PC-9 (cell line): ENCODE measurements at regions of chr9 and their contacts with region 1.

Region 1: DNA sequence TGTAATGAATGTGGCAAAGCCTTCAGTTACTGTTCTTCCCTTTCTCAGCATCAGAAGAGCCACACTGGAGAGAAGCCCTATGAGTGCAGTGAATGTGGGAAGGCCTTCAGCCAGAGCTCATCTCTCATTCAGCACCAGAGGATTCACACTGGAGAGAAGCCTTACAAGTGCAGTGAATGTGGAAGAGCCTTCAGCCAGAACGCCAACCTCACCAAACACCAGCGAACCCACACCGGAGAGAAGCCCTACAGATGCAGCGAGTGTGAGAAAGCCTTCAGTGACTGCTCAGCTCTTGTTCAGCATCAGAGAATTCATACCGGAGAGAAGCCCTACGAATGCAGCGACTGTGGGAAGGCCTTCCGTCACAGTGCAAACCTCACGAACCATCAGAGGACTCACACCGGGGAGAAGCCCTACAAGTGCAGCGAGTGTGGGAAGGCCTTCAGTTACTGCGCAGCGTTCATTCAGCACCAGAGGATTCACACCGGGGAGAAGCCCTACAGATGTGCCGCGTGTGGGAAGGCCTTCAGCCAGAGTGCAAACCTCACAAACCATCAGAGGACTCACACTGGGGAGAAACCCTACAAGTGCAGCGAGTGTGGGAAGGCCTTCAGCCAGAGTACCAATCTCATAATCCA is 6.8 kb downstream of the RPL12 start:
- DNase-seq: no peak
- H3K4me3 ChIP-seq: no peak overlapping the region
- H3K27ac ChIP-seq: no peak overlapping the region
- H3K4me1 ChIP-seq: 0 out of 2 replicates have a peak, but pooled peaks cover 12% of the 10 kb centered on the region
- H3K27me3 ChIP-seq: no peaks in the 10 kb centered on the region
- CTCF ChIP-seq: no peak

Region 2: DNA sequence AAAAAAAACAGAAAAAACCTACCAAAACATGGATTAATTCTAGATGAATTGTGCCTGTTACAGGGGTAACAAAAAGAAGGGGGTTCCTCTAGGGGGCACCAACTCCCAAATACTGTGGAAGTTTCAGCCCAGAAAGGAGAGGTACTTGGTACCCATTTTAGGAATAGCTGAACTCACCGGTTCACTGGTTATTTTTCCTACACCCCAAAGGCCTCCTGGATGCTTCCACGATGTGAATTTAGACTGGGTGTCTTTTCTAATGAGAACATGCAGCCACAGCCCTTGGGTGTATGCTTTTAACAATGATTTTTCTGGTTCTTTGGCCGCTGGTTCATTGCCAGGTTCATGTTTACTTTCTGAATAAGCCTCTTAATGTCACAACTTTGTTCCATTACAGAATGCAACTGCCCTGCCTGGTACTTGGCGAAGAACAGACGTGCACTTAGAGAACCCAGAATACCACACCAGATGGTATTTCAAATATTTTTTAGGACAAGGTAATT is 133.1 kb before region 1 on chr9:
- CTCF ChIA-PET with region 1: no interaction called
- POLR2A ChIA-PET with region 1: interaction called, 17 read pairs
- intact Hi-C with region 1: no loop called
- DNase-seq: peak; percentile 63 to 84
- H3K4me3 ChIP-seq: no peak overlapping the region
- H3K27ac ChIP-seq: no peak overlapping the region; the same call in 1 of the 2 replicates
- H3K4me1 ChIP-seq: peaks cover 34% of the 10 kb centered on the region
- H3K27me3 ChIP-seq: no peaks in the 10 kb centered on the region
- CTCF ChIP-seq: peak; percentile 62; the same call in 1 of the 2 replicates

Region 3: DNA sequence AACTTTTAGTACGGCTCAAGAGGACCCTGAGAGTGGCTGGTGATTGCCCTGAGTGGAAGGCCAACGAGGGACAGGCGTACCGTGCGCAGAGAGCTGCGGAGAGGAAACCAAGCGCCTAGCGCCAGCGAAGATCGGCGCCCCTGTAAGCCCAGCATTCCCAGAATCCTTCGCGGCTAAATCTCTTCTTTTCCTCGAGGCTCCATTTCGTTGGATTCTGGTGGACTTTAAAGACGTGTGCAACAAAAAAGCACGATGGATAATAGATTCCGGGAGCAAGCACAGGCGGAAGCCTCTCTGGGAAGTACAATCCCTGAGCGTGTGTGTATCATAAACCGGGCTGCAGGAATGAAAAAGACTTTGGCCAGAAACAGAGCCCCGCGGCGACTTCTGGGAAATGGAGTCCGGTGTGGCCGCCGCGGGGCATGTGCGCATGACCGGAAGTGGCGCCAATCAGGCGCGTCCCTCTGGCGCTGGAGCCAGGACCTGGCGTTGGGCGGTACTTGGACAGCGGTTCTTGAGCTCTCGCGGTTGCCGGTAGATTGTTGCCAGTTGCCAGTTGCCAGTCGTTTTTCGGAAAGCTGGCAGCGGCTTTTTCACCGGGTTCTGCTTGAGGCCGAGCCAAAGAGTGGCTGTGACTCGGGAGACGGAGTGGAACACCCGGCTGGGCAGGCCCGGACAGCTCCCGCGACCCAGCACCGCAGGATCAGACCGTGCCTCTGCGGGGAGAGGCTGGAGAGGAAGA is 20.3 kb before region 1 on chr9 and contains the start of gene ZNF79:
- CTCF ChIA-PET with region 1: no interaction called
- POLR2A ChIA-PET with region 1: interaction called, 18 read pairs
- intact Hi-C with region 1: no loop called
- DNase-seq: peak; percentile 78 to 95
- H3K4me3 ChIP-seq: peak within 1 kb of the TSS; percentile 85
- H3K27ac ChIP-seq: peak within 1 kb of the TSS; percentile 42
- H3K4me1 ChIP-seq: peaks cover 17% of the 10 kb centered on the region
- H3K27me3 ChIP-seq: no peaks in the 10 kb centered on the region
- CTCF ChIP-seq: no peak
- total RNA-seq, gene ZNF79: 5.5 and 5.8 TPM in 2 replicates

Region 4: GRCh38 chr9:127561619-127562500 is 117.5 kb after region 1 on chr9:
- CTCF ChIA-PET with region 1: no interaction called
- POLR2A ChIA-PET with region 1: interaction called, 11 read pairs
- intact Hi-C with region 1: no loop called
- DNase-seq: peak; percentile 99 to 100
- H3K4me3 ChIP-seq: peak overlapping the region; percentile 8; the same call in 1 of the 2 replicates
- H3K27ac ChIP-seq: peak overlapping the region; percentile 86
- H3K4me1 ChIP-seq: peaks cover 95% of the 10 kb centered on the region
- H3K27me3 ChIP-seq: no peaks in the 10 kb centered on the region
- CTCF ChIP-seq: no peak

Region 5: DNA sequence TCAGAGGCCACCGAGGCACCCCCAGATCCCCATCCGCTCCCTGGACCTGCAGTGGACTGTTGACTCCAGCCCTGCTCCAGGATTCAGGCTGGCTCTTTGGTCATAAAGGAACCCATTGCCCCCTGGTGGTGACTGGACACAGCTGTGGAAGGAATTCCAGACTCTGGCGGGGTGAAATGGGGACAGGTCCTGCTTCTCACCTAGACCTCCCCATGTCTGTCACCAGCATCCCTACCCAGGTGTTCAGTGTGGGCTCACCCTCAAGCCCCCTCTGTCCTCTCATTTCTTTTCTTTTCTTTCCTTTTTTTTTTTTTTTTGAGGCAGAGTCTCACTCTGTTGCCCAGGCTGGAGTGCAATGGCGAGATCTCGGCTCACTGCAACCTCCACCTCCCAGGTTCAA is 142.1 kb after region 1 on chr9:
- CTCF ChIA-PET with region 1: no interaction called
- POLR2A ChIA-PET with region 1: no interaction called
- intact Hi-C with region 1: no loop called
- DNase-seq: peak in 1 of 2 experiments; percentile 82
- H3K4me3 ChIP-seq: no peak overlapping the region
- H3K27ac ChIP-seq: no peak overlapping the region
- H3K4me1 ChIP-seq: peaks cover 23% of the 10 kb centered on the region
- H3K27me3 ChIP-seq: no peaks in the 10 kb centered on the region
- CTCF ChIP-seq: peak; percentile 93